ENCODE measurements at regions of chr3 and their contacts with region 1.

Region 1: DNA sequence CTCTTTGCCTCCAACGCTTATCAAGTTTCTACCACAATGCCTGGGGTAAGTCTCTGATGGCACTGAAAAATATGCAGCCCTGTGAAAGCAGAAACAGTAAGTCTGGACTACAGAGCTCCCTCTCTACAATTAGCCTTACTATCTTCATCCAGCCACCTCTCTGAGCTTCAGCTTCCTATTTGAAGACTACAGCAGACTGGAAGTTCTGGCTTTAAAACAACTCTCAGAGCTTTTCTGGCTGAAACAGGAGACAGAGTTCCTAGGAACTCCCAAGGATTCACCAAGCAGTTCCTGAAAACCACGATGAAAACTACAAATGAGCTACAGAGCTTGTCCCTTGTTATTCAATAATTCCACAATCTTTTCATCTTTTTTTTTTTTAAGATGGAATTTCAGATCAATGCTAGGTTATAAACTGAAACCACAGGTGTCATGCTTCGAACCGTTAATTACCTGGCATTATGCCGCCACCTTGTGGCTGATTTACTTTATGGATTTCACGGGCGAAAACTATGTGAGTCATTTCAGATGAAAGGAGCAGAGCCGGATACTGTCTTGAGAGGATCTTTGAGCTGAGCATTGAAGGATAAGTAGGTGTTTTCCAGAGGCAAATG is 3.9 kb downstream of the CRYGS start:
- DNase-seq: peak; percentile 70
- H3K27ac ChIP-seq: no peak overlapping the region
- CTCF ChIP-seq: peak; percentile 71

Region 2: GRCh38 chr3:185983495-185984141 is 556.7 kb before region 1 on chr3:
- CTCF ChIA-PET with region 1: interaction called, 12 read pairs
- POLR2A ChIA-PET with region 1: no interaction called
- DNase-seq: peak; percentile 81
- H3K27ac ChIP-seq: no peak overlapping the region
- CTCF ChIP-seq: peak; percentile 82

Region 3: DNA sequence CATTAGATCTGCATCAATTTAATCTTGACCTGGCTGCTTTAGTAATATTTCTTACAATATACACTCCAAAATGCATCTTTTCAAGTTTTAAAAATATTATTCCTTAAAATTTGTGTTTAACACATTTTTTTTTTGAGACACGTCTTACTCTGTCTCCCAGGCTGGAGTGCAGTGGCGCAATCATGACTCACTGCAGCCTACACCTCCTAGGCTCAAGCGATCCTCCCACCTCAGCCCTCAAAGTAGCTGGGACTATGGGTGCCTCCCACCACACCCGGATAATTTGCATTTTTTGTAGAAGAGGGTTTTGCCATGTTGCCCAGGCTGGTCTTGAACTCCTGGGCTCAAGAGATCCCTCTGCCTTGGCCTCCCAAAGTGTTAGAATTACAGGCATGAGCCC is 505.1 kb before region 1 on chr3:
- CTCF ChIA-PET with region 1: no interaction called
- POLR2A ChIA-PET with region 1: no interaction called
- DNase-seq: no peak
- H3K27ac ChIP-seq: no peak overlapping the region
- CTCF ChIP-seq: no peak

Region 4: DNA sequence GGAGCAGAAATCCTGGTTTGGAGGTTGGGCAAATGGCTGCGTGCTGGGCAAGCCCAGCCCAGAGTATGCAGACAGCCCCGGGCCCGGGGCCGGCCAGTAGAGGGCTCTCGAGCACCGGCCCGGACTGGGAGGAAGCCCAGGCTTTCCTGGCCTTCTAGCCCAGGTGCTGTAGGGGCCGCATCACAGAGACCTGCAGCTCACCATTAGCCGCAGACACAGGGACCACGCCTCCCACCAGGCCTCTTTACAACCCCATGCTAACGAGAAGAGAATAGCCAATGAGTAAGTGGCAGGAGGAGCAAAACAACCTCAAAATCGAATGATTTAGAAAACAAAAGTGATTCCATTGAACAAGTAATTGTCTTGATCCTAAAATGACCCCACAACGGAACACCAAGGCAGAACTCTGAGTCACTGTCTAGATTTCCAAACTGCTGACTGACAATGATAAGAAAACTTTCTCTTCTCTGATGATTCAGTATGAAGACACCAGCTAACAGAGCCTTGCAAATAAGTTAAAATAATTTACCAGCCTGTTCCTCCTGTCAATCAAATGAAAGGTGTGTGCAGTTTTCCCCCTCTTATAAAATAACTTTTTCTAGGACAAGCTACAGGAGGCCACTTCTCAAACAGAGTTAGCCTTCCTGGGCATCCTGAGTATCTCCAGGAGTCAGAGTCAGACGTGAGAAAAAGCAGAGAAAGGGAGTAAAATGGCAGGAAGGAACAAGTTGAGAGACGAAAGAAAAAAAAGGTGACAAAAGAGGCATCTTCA is 280.5 kb before region 1 on chr3:
- CTCF ChIA-PET with region 1: interaction called, 26 read pairs
- POLR2A ChIA-PET with region 1: no interaction called
- DNase-seq: peak; percentile 88
- H3K27ac ChIP-seq: 0 out of 2 replicates have a peak overlapping the region, but pooled peaks have one; percentile 22
- CTCF ChIP-seq: peak; percentile 85

Region 5: DNA sequence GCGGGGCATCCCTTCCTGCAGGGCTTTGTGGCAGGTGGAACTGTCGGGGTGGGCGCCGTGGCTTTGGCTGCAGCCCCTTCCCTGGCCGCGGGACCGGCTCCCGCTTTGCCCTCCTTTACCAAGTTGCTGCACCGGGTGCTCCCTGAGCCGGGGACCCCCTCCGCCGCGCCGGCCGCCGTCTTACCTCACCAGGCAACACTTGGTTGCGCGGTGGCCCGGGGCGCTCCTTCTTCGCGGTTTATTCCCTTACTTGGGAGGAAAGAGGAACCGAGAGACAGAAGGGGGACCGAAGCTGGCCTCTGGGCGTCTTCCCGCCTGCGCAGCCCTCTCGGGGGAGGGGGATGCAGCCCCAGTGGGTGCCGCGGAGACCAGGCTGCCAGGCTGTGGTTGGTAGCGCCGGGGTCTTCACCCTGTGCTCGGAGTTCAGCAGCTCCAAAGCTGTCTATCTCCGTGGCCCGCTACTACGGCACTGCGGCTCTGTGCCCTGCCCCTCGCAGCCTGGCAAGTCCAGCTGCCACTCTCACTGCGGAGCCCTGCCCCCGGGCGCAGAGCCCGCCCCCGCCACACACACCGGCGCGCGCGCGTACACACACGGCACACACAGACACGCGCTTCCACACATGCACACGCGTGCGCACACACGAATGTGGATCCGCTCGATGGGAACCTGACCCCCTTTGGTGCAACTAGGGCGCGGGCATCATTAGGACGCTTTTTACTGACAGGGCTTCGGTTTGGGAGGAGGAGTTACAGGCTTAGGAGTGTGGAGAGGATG is 178.4 kb before region 1 on chr3 and contains the start of gene DGKG:
- CTCF ChIA-PET with region 1: interaction called, 10 read pairs
- POLR2A ChIA-PET with region 1: no interaction called
- DNase-seq: peak; percentile 42
- H3K27ac ChIP-seq: no peak within 1 kb of the TSS
- CTCF ChIP-seq: no peak

Region 6: GRCh38 chr3:186487819-186488218 is 52.5 kb before region 1 on chr3:
- CTCF ChIA-PET with region 1: no interaction called
- POLR2A ChIA-PET with region 1: no interaction called
- DNase-seq: no peak
- H3K27ac ChIP-seq: no peak overlapping the region
- CTCF ChIP-seq: no peak

Region 7: DNA sequence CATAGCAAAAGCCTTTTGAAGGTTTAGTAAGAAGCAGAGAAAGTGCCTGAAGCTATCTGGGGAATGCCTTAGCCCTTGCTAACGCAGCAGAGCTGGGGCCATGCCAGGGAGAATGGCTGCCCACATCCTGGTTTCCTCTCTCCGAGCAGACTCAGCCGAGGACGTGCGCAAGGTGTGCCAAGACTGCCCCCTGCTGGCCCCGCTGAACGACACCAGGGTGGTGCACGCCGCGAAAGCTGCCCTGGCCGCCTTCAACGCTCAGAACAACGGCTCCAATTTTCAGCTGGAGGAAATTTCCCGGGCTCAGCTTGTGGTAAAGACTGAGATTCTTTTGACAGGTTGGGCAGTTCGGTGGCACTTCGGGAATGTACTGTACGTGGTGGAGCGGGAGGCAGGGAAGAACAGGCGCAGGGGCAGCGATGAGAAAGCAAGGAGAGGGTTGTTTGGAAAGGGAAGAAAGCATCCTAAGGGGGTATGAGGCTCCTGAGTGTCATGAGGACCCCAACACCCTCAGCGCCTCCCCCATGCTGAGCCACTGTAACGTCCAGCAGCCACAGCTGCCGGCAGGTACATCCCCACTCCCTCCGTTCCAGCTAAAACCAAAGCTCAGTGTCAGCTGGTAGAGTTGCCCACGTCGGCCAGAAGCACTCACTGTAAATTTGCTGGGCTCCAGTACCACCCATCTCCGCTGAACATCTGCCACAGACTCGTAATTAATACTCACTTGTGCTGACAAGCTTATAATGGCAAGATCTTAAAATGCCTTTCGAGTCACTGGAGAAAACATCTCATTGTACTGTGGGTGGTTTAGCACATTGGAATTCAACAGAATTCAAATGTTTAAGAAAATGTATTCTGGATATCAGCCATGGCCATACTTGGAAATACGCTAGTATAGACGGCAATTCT is 77.0 kb after region 1 on chr3:
- CTCF ChIA-PET with region 1: interaction called, 12 read pairs
- POLR2A ChIA-PET with region 1: no interaction called
- DNase-seq: peak; percentile 95
- H3K27ac ChIP-seq: peak overlapping the region; percentile 89
- CTCF ChIP-seq: peak; percentile 93

Measured in RWPE1 (cell line).